ENCODE measurements at regions of chr20 and their contacts with region 1.

Region 1: GRCh38 chr20:31723319-31724078 is 831 bp upstream of the BCL2L1 start:
- DNase-seq: peak; percentile 98 to 99
- ATAC-seq: peak; percentile 95 to 98 (median 96)
- H3K4me3 ChIP-seq: peak overlapping the region; percentile 64 to 93 (median 81)
- H3K27ac ChIP-seq: peak overlapping the region; percentile 96 to 100 (median 99)
- H3K4me1 ChIP-seq: peaks cover 7 to 39% (median 27%) of the 10 kb centered on the region in 9 donors
- H3K27me3 ChIP-seq: no peaks in the 10 kb centered on the region
- CTCF ChIP-seq: peak; percentile 89 to 95 (median 92)

Region 2: GRCh38 chr20:31496761-31497295 is 226.7 kb before region 1 on chr20:
- intact Hi-C with region 1: no loop called
- DNase-seq: peak; percentile 84 to 89
- ATAC-seq: peak; percentile 87 to 94 (median 92)
- H3K4me3 ChIP-seq: peak overlapping the region in 2 of 10 donors; percentile 7 to 19
- H3K27ac ChIP-seq: peak overlapping the region; percentile 56 to 85 (median 75)
- H3K4me1 ChIP-seq: peaks cover 0 to 36% (median 19%) of the 10 kb centered on the region in 9 donors
- H3K27me3 ChIP-seq: peaks cover 0 to 14% (median 7%) of the 10 kb centered on the region in 7 donors
- CTCF ChIP-seq: no peak

Region 3: DNA sequence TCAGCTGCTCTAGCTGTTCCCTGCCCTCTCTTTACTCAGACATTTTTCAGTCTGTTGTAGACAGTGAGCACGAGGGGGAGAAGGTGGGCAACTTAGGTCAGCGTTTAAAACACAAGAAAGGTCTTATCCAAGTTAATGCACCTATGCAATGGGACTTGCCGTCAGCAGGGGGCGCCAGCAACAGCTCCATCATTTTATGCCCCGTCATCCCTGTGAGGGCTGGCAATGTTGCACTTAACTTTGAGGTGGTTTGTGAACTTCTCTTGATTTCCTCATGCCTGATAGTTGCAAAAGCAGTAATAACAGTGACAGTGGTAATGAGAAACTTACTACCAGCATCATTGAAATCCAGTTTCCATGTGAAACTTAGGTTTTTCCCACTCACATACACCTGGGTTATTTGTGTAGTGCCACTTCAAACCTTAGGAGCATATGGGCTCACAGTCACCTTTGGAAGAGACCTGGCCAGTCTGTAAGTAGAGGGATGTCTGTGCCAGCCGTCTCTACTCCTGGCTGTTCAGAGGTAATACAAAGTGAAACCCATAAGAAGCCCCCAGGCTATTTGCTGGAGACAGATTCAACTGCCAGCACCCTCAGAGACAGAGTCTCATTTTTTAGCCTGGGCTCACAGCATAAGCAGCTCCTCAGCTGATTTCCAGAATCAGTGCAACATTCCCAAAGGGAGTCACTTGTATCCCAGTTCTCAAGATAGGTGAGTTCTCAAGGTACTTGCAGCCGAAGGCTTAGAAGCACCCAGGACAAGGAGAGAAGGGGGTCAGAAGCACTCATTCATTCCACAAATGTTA is 163.2 kb before region 1 on chr20:
- intact Hi-C with region 1: loop called in 7 of 10 experiments (anchors 5 to 10 kb)
- DNase-seq: peak; percentile 57 to 66
- ATAC-seq: peak in 6 of 8 donors; percentile 17 to 39 (median 23)
- H3K4me3 ChIP-seq: no peak overlapping the region
- H3K27ac ChIP-seq: peak overlapping the region in 2 of 10 donors; percentile 50 to 72
- H3K4me1 ChIP-seq: peaks cover 0 to 27% (median 5%) of the 10 kb centered on the region in 9 donors
- H3K27me3 ChIP-seq: no peaks in the 10 kb centered on the region
- CTCF ChIP-seq: peak; percentile 76 to 91 (median 86)

Region 4: GRCh38 chr20:31572701-31573554 is 150.6 kb before region 1 on chr20:
- intact Hi-C with region 1: loop called in 7 of 10 experiments (anchors 5 to 10 kb)
- DNase-seq: peak; percentile 93 to 96
- ATAC-seq: peak; percentile 88 to 92 (median 90)
- H3K4me3 ChIP-seq: peak overlapping the region; percentile 22 to 69 (median 56)
- H3K27ac ChIP-seq: peak overlapping the region; percentile 87 to 96 (median 93)
- H3K4me1 ChIP-seq: peaks cover 4 to 63% (median 39%) of the 10 kb centered on the region in 9 donors
- H3K27me3 ChIP-seq: no peaks in the 10 kb centered on the region
- CTCF ChIP-seq: peak in 1 of 9 donors; percentile 6

Region 5: GRCh38 chr20:31630187-31630790 is 93.2 kb before region 1 on chr20:
- intact Hi-C with region 1: loop called in 1 of 10 experiments (anchors 1 kb)
- DNase-seq: no peak
- ATAC-seq: no peak
- H3K4me3 ChIP-seq: no peak overlapping the region
- H3K27ac ChIP-seq: no peak overlapping the region
- H3K4me1 ChIP-seq: peaks cover 0 to 5% (median 0%) of the 10 kb centered on the region in 9 donors
- H3K27me3 ChIP-seq: no peaks in the 10 kb centered on the region
- CTCF ChIP-seq: no peak

Region 6: DNA sequence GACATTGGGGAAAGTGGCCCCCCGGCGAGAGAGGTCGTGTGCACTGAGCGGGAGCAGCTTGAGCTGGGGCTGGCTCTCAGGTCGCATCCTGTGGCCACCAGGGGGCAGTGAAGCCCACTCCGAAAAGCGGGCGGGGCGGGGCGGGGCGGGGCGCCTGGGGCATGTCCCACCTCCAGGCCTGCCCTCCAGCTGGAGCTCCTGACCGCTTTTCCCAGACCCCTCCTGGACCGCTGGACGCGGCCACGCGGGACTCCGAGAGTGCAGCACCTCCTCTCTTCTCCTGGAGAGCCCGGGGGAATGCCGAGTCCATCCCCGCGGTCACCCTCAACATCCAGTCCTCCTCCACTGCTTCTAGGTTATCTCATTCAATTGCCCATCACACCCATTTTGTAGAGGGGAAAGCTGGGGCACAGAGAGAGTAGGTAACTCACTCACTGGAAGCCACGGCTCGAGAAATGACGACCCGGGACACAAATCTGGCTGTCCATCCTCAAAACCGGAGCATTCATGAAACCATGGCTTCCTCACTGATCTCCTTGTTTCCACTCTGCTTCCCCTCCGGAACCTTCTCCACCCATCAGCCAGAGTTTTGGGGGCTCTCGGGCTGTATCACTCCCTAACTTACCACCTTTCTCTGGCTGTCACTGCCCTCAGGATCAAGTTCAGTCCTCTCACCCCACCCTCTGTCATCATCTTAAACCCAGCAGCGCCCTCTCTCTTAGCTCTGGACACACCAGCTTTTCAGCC is 61.7 kb before region 1 on chr20:
- intact Hi-C with region 1: loop called (anchors 1 to 5 kb)
- DNase-seq: peak; percentile 83 to 87
- ATAC-seq: peak; percentile 83 to 92 (median 89)
- H3K4me3 ChIP-seq: peak overlapping the region in 8 of 10 donors; percentile 26 to 56 (median 46)
- H3K27ac ChIP-seq: peak overlapping the region; percentile 21 to 80 (median 76)
- H3K4me1 ChIP-seq: peaks cover 16 to 51% (median 44%) of the 10 kb centered on the region in 9 donors
- H3K27me3 ChIP-seq: no peaks in the 10 kb centered on the region
- CTCF ChIP-seq: peak; percentile 76 to 91 (median 87)

Region 7: DNA sequence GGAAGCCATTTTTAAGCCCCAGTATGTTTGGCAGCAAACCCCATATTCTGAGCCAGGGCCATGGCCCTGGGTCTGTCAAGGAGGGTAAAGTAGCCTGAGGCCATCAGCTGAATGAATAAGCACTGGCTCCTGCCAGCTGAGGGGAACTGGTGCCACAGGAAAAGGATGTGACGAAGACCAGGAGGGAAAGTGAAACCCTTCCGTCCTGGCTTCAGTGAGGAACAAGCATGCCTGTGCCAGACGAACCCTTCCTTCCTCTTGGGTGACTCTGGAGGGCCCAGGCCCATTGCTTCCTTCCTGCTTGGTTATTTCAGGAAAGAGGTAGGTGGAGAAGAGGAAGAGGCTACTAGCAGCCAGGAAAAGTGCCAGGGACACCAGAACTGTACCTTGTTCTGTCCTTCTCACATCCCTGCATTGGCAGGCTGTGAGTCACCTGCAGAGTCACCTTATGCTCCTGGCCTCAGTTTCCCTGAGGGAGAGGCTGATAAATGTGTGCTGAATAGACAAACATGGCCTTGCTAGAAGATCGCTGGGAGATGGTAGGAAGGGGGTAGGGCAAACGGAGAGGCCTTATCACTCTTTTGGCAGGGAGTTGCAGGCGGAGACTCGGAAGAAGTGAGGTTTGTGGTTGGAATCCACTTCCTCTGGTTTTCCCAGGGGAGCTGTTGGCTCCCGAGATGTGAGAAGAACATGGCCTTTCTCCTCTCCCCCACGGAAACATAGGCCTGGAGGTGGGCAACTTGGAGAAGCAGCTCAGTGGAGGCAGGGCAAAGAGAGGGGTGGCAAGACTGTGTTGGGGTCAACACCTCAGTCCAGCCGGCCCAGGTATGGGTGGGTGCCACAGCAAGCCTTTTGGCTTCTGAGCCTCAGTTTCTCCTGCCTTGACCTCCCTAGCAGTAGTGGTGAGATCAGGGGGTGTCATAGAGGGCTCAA is 48.3 kb before region 1 on chr20:
- intact Hi-C with region 1: loop called in 2 of 10 experiments (anchors 2 kb)
- DNase-seq: peak; percentile 41 to 81
- ATAC-seq: peak; percentile 46 to 78 (median 68)
- H3K4me3 ChIP-seq: peak overlapping the region in 4 of 10 donors; percentile 1 to 52 (median 16)
- H3K27ac ChIP-seq: peak overlapping the region; percentile 47 to 92 (median 84)
- H3K4me1 ChIP-seq: peaks cover 59 to 100% (median 100%) of the 10 kb centered on the region in 9 donors
- H3K27me3 ChIP-seq: no peaks in the 10 kb centered on the region
- CTCF ChIP-seq: no peak

Region 8: DNA sequence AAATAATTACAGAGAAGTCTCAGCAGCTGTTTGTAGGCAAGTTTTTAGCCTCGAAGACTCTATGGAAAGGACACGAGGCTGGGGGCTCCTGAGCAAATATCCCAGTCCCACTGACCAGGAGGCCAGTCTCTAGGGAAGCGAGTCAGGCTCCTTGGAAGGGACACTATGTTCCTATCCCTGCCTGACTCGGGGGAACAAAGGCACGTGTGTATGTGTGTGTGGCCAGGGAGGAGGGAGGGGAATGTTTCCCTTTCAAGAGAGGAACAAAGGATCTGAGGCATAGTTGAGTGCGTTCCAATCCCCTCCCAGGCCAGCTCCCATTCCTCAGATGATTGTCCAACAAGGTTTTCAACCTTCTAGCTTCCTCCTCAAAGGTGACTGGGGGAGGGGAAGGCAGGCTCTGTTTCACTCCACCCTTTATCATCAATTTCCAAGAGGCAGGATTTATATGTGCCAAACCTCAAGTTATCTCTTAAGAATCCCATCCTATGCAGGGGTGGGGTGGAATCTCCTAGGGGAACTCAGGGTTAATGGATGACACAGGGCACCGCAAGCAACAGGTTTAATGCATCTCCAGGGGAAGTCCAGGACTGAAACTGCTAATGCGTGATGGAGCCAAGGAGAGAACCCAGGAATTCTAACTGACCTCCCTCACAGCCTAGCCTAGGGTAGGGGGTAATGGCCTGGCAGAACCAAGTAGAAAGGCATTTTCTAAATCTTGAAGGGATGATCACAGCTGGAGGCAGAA is 10.8 kb before region 1 on chr20:
- intact Hi-C with region 1: loop called in 2 of 10 experiments (anchors 1 kb)
- DNase-seq: peak; percentile 66 to 91
- ATAC-seq: peak; percentile 81 to 94 (median 90)
- H3K4me3 ChIP-seq: peak overlapping the region in 9 of 10 donors; percentile 10 to 43 (median 33)
- H3K27ac ChIP-seq: peak overlapping the region; percentile 88 to 100 (median 96)
- H3K4me1 ChIP-seq: peaks cover 44 to 100% (median 97%) of the 10 kb centered on the region in 9 donors
- H3K27me3 ChIP-seq: no peaks in the 10 kb centered on the region
- CTCF ChIP-seq: no peak

Region 9: GRCh38 chr20:31801508-31801907 is 78.0 kb after region 1 on chr20:
- intact Hi-C with region 1: no loop called
- DNase-seq: no peak
- ATAC-seq: no peak
- H3K4me3 ChIP-seq: no peak overlapping the region
- H3K27ac ChIP-seq: no peak overlapping the region
- H3K4me1 ChIP-seq: peaks cover 0 to 6% (median 0%) of the 10 kb centered on the region in 9 donors
- H3K27me3 ChIP-seq: no peaks in the 10 kb centered on the region
- CTCF ChIP-seq: no peak

Measured in heart right ventricle (tissue), 16 donors.